A549 (cell line): ENCODE measurements at regions of chr7 and their contacts with region 1.

Region 1: DNA sequence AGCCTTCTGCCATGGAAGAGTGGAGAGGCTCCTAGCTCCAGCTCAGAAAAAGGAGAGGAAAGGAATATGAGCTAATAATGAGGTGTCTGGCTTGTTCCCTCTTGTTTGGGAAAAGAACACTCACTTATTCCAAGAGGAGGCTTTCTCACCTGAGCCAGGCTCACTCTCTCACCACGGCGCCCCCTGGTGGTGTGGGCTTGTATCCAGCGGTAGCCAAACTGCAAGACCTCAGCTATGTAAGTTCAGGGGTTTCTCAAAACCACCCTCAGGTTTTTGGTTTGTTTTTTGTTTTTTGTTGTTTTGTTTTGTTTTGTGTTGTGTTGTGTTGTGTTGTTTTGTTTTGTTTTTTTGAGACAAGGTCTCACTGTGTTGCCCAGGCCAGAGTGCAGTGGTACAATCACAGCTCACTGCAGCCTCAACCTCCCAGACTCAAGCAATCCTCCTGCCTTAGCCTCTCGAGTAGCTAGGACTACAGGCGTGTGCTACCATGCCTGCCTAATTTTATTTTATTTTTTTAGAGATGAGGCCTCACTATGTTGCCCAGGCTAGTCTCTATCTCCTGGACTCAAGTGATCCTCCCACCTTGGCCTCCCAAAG is 124.0 kb downstream of the TMEM130 start:
- DNase-seq: peak; percentile 68 to 71
- ATAC-seq: peak; percentile 74 to 92; a peak in 5 of 6 replicates
- H3K4me3 ChIP-seq: no peak overlapping the region
- H3K27ac ChIP-seq: no peak overlapping the region
- H3K4me1 ChIP-seq: no peaks in the 10 kb centered on the region
- CTCF ChIP-seq: peak; percentile 82
- EP300 ChIP-seq: no peak
- POLR2A ChIP-seq: no peak
- RAD21 ChIP-seq: peak; percentile 68 to 72

Region 2: DNA sequence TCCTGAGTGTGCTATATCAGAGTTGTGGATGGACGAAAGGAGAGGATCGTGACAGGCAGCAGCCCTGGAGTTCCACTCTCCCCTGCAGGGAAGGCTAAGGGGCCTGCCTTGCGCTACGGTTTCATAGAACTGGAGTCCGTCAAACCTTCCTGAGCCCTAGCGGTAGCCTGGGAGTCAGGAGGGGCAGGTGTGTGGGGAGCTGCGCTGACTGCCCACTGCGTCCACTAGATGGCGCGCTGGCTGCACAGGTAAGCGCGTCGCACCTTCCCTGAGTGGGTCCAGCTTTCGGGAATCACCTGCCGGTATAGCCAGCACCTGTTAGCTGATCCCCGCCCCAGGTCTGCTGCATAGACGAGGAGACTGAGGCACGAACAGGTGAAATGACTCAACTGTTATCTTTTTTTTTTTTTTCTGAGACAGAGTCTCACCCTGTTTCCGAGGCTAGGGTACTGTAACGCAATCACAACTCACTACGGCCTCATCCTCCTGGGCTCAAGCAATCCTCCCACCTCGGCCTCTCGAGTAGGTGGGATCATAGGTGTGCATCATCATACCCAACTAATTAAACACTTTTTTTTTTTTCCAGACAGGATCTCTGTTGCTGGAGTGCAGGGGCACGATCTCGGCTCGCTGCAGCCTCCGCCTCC is 324.7 kb before region 1 on chr7:
- CTCF ChIA-PET with region 1: interaction called, 11 read pairs
- POLR2A ChIA-PET with region 1: no interaction called
- DNase-seq: peak; percentile 89 to 92
- ATAC-seq: peak; percentile 53 to 64; a peak in 5 of 6 replicates
- H3K4me3 ChIP-seq: no peak overlapping the region
- H3K27ac ChIP-seq: peak overlapping the region; percentile 55 to 72
- H3K4me1 ChIP-seq: peaks cover 43% of the 10 kb centered on the region
- CTCF ChIP-seq: peak; percentile 94
- EP300 ChIP-seq: no peak
- POLR2A ChIP-seq: no peak
- RAD21 ChIP-seq: peak; percentile 83 to 84

Region 3: DNA sequence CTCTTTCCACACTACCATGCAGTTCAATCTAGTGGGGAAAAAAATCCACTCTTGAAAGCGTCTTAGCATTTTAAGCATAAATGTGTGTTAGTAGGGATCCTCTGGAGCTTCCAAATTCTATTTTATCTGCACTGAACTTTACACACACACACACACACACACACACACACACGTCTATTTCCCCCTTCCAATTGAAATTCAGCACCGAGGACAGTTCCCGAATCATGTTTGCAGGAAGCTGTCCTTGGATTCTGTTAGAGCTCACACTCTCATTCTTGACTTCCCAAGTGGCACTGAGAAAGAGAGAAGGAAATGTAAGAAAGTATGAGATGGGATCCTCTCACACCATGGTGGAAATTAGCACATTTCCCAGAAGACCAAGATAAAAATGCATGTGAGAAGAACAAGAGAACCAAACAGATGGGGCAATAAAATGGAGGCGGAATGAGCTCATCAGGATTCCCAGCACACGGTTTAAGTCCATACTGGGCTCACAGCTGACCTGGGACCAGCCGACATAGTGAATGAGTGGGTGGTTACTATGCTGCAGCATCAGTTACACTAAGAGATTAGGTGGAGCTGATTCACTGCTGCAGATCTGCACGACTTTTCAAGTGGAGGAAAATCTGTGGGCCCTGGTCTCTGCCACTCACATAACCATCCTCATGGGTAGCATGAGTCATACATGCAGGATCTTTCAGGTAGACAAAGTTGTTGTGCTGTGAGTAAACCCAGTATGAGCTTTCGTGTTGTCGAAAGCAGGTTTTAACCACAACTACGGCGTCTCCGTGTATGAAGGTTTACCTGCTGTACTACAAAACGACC is 132.0 kb before region 1 on chr7:
- CTCF ChIA-PET with region 1: interaction called, 10 read pairs
- POLR2A ChIA-PET with region 1: no interaction called
- DNase-seq: peak in 1 of 2 experiments; percentile 37
- ATAC-seq: no peak
- H3K4me3 ChIP-seq: no peak overlapping the region
- H3K27ac ChIP-seq: no peak overlapping the region
- H3K4me1 ChIP-seq: peaks cover 8% of the 10 kb centered on the region; the same call in 1 of the 3 replicates
- CTCF ChIP-seq: no peak
- EP300 ChIP-seq: no peak
- POLR2A ChIP-seq: no peak
- RAD21 ChIP-seq: no peak

Region 4: DNA sequence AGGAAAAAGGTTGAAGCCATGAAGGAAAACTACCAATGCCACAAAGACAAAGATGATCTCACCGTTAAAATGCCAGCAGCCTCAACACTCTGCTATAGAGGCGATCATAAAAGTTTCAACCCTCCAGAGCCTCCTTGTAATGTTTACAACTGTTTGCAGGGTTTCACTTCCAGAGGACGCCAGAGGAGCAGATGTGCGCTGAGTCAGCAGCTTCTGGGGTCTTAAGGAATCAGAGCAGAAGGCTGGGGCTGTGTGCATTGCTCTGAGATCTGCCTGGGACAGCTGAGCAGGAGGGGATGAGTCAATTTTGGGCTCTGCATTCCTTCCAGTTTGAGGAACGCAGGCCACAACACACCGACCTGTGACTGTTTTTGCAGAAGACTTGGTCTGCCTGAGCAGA is 25.7 kb after region 1 on chr7:
- CTCF ChIA-PET with region 1: interaction called, 16 read pairs
- POLR2A ChIA-PET with region 1: no interaction called
- DNase-seq: no peak
- ATAC-seq: peak; percentile 40 to 48; a peak in 3 of 6 replicates
- H3K4me3 ChIP-seq: no peak overlapping the region
- H3K27ac ChIP-seq: no peak overlapping the region
- H3K4me1 ChIP-seq: 0 out of 3 replicates have a peak, but pooled peaks cover 4% of the 10 kb centered on the region
- CTCF ChIP-seq: no peak
- EP300 ChIP-seq: no peak
- POLR2A ChIP-seq: no peak
- RAD21 ChIP-seq: no peak

Region 5: GRCh38 chr7:98831641-98832221 is 85.9 kb after region 1 on chr7:
- CTCF ChIA-PET with region 1: interaction called, 17 read pairs
- POLR2A ChIA-PET with region 1: no interaction called
- DNase-seq: peak in 1 of 2 experiments; percentile 41
- ATAC-seq: no peak
- H3K4me3 ChIP-seq: no peak overlapping the region
- H3K27ac ChIP-seq: no peak overlapping the region
- H3K4me1 ChIP-seq: no peaks in the 10 kb centered on the region
- CTCF ChIP-seq: peak; percentile 47; the same call in 2 of the 3 replicates
- EP300 ChIP-seq: no peak
- POLR2A ChIP-seq: no peak
- RAD21 ChIP-seq: 0 out of 5 replicates have a peak, but pooled peaks of 1 of the 2 experiments have one; percentile 25